Mammary epithelial cell (primary cell): ENCODE measurements at regions of chr5 and their contacts with region 1.

Region 1: DNA sequence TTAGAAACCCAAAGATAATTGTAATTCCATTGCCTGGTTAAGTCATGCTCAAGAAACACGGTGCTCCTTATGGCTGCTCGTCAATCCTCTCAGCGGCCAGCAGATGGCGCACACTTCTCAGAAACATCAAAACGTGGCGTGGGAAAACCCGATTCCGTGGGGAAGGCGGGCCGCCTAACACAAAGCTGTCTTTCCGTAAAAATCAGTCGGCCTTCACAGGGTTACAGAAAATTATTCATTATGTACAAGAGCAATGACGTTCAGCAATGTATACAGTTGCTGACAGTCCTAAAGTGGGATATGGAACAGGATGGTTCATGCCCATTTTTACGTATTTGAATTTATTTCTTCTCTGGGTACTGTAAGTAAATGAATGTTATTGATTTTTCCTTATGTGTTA is 83.5 kb downstream of the PDE4D start:
- DNase-seq: peak; percentile 40
- H3K4me3 ChIP-seq: peak overlapping the region; percentile 28 to 34 (median 30)
- H3K27ac ChIP-seq: no peak overlapping the region
- H3K4me1 ChIP-seq: no peaks in the 10 kb centered on the region
- H3K27me3 ChIP-seq: no peaks in the 10 kb centered on the region
- CTCF ChIP-seq: peak; percentile 87 to 88

Region 2: DNA sequence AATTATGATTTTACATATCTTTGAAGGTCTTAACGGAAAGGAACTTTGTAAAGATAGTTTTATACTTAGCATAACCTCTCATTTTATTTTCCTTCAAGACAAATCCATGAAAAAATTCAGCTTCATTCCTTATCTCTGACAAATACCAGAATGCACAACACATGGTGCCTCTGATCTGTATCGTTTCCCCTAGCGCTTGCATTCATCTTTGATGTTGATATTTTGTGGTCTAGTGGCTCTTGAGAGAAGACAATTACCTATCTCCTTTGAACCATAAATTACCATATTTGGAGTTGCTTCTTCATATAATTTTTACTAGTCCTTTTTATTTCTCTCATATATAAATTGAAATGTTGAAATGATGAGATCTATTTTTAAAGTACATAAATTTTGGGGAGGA is 467.9 kb before region 1 on chr5:
- CTCF ChIA-PET with region 1: no interaction called
- dilution Hi-C with region 1: no loop called
- in situ Hi-C with region 1: no loop called
- intact Hi-C with region 1: no loop called
- DNase-seq: no peak
- H3K4me3 ChIP-seq: no peak overlapping the region
- H3K27ac ChIP-seq: no peak overlapping the region
- H3K4me1 ChIP-seq: no peaks in the 10 kb centered on the region
- H3K27me3 ChIP-seq: no peaks in the 10 kb centered on the region
- CTCF ChIP-seq: no peak

Region 3: GRCh38 chr5:59845730-59846129 is 35.7 kb after region 1 on chr5:
- CTCF ChIA-PET with region 1: no interaction called
- dilution Hi-C with region 1: no loop called
- in situ Hi-C with region 1: no loop called
- intact Hi-C with region 1: no loop called
- DNase-seq: peak; percentile 4
- H3K4me3 ChIP-seq: no peak overlapping the region
- H3K27ac ChIP-seq: no peak overlapping the region
- H3K4me1 ChIP-seq: no peaks in the 10 kb centered on the region
- H3K27me3 ChIP-seq: no peaks in the 10 kb centered on the region
- CTCF ChIP-seq: no peak

Region 4: DNA sequence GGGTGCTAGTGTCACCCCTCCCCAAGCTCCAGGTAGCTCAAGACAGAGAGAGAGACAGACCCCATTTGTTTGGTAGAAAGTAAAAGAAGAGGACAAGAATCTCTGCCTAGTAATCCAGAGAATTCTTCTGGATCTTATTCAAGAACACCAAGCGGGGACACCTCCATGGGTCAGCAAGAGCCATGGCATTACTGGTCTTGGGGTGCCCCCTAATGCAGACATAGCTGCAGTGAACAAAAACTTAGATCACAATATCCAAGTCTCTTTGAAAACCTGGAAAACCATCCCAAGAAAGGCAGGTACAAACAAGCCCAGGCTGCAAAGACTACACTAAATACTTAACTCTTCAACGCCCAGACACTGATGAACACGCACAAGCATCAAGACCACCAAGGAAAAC is 113.4 kb after region 1 on chr5:
- CTCF ChIA-PET with region 1: interaction called, 4 read pairs
- dilution Hi-C with region 1: no loop called
- in situ Hi-C with region 1: no loop called
- intact Hi-C with region 1: loop called (anchors 1 kb)
- DNase-seq: peak; percentile 4
- H3K4me3 ChIP-seq: no peak overlapping the region
- H3K27ac ChIP-seq: no peak overlapping the region
- H3K4me1 ChIP-seq: no peaks in the 10 kb centered on the region
- H3K27me3 ChIP-seq: no peaks in the 10 kb centered on the region
- CTCF ChIP-seq: peak in 1 of 2 donors; percentile 30

Region 5: GRCh38 chr5:60257596-60258271 is 447.7 kb after region 1 on chr5:
- CTCF ChIA-PET with region 1: no interaction called
- dilution Hi-C with region 1: loop called (anchors 25 kb)
- in situ Hi-C with region 1: no loop called
- intact Hi-C with region 1: no loop called
- DNase-seq: no peak
- H3K4me3 ChIP-seq: no peak overlapping the region
- H3K27ac ChIP-seq: no peak overlapping the region
- H3K4me1 ChIP-seq: no peaks in the 10 kb centered on the region
- H3K27me3 ChIP-seq: peaks cover 3% of the 10 kb centered on the region
- CTCF ChIP-seq: no peak

Region 6: DNA sequence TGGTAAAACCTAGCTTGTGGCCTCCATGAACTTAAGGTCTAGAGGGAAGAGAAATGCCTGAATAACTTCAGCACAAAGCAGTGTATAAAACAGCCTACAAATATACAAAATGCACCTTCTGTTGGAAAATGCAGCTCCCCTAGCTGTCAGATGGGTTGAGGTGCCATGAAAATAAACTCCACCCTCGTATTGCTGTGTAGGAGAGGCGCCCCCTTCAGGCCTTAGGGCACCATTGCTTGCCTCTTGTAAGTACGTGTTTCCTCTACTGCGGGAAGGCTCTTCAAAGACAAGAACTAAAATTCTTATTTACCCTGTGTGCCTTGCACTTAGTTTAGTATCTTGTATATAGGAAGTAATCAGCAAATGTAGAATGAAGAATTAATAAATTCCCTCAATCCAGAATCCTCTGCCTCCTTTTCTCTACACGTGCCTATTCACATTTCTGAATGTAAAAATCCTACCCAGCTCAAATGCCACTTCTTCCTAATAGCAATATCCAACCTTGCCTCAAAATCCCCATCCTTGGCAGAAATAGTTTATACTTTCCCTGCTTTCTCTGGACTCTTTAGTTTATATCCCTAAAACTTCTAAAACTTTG is 477.2 kb after region 1 on chr5:
- CTCF ChIA-PET with region 1: interaction called, 4 read pairs
- dilution Hi-C with region 1: no loop called
- in situ Hi-C with region 1: no loop called
- intact Hi-C with region 1: loop called (anchors 1 kb)
- DNase-seq: peak; percentile 52
- H3K4me3 ChIP-seq: no peak overlapping the region
- H3K27ac ChIP-seq: no peak overlapping the region
- H3K4me1 ChIP-seq: no peaks in the 10 kb centered on the region
- H3K27me3 ChIP-seq: no peaks in the 10 kb centered on the region
- CTCF ChIP-seq: peak; percentile 89 to 94

Region 7: GRCh38 chr5:60586307-60586901 is 776.4 kb after region 1 on chr5:
- CTCF ChIA-PET with region 1: no interaction called
- dilution Hi-C with region 1: no loop called
- in situ Hi-C with region 1: no loop called
- intact Hi-C with region 1: loop called (anchors 5 kb)
- DNase-seq: no peak
- H3K4me3 ChIP-seq: no peak overlapping the region
- H3K27ac ChIP-seq: no peak overlapping the region
- H3K4me1 ChIP-seq: no peaks in the 10 kb centered on the region
- H3K27me3 ChIP-seq: no peaks in the 10 kb centered on the region
- CTCF ChIP-seq: peak; percentile 14 to 50

Region 8: GRCh38 chr5:60668686-60669304 is 858.8 kb after region 1 on chr5:
- CTCF ChIA-PET with region 1: no interaction called
- dilution Hi-C with region 1: no loop called
- in situ Hi-C with region 1: loop called in 1 of 2 experiments (anchors 25 kb)
- intact Hi-C with region 1: loop called (anchors 1 kb)
- DNase-seq: peak; percentile 28
- H3K4me3 ChIP-seq: no peak overlapping the region
- H3K27ac ChIP-seq: no peak overlapping the region
- H3K4me1 ChIP-seq: no peaks in the 10 kb centered on the region
- H3K27me3 ChIP-seq: no peaks in the 10 kb centered on the region
- CTCF ChIP-seq: peak; percentile 51 to 61